Activated CD8-positive, alpha-beta T cell treated with anti-CD3 and anti-CD28 coated beads, Interleukin-2, amount 10 ng/mL, durations not matched to agents 7 days and 5 days (primary cell): ENCODE measurements at regions of chr10 and their contacts with region 1.

Region 1: GRCh38 chr10:22988581-22989360 is 60.9 kb downstream of the ARMC3 start:
- DNase-seq: peak; percentile 78
- ATAC-seq: peak; percentile 71
- H3K4me3 Mint-ChIP-seq: no peak overlapping the region
- H3K27ac Mint-ChIP-seq: no peak overlapping the region
- H3K4me1 Mint-ChIP-seq: peaks cover 21% of the 10 kb centered on the region
- H3K27me3 Mint-ChIP-seq: peaks cover 11% of the 10 kb centered on the region

Region 2: GRCh38 chr10:21993360-21994001 is 995.3 kb before region 1 on chr10:
- CTCF ChIA-PET with region 1: interaction called, 29 read pairs
- POLR2A ChIA-PET with region 1: no interaction called
- DNase-seq: no peak
- ATAC-seq: no peak
- H3K4me3 Mint-ChIP-seq: no peak overlapping the region
- H3K27ac Mint-ChIP-seq: no peak overlapping the region
- H3K4me1 Mint-ChIP-seq: peaks cover 2% of the 10 kb centered on the region
- H3K27me3 Mint-ChIP-seq: no peaks in the 10 kb centered on the region

Region 3: GRCh38 chr10:22010973-22011408 is 977.8 kb before region 1 on chr10:
- CTCF ChIA-PET with region 1: interaction called, 11 read pairs
- POLR2A ChIA-PET with region 1: no interaction called
- DNase-seq: no peak
- ATAC-seq: no peak
- H3K4me3 Mint-ChIP-seq: no peak overlapping the region
- H3K27ac Mint-ChIP-seq: no peak overlapping the region
- H3K4me1 Mint-ChIP-seq: no peaks in the 10 kb centered on the region
- H3K27me3 Mint-ChIP-seq: peaks cover 25% of the 10 kb centered on the region

Region 4: DNA sequence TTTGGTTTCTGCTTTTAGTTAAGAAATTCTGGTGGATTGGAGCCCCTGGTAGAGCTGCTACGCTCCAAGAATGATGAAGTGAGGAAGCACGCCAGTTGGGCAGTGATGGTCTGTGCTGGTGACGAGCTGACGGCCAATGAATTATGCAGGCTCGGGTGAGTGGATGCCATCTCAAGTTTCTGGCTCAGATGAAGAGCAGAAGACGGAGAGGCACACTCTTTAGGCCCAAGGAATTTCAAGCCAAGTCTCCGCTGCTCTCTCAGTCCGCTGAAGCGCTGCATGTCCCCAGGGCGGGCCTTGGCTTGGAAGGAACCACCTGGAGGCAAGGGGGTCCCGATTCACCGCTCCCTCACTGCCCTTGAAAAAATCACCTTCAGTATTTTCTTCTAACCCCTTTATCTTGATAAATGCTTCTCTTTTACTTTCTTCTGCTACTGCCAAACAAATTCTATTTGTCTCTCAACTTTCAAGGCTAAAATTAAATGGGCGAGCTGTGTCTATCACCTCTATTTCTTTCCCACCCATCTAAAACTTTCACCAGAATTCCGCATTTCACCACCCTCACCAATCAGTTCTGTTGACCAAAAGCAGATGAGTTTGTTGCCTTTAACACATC is 13.2 kb after region 1 on chr10:
- CTCF ChIA-PET with region 1: interaction called, 11 read pairs
- POLR2A ChIA-PET with region 1: no interaction called
- DNase-seq: no peak
- ATAC-seq: no peak
- H3K4me3 Mint-ChIP-seq: no peak overlapping the region
- H3K27ac Mint-ChIP-seq: no peak overlapping the region
- H3K4me1 Mint-ChIP-seq: no peaks in the 10 kb centered on the region
- H3K27me3 Mint-ChIP-seq: peaks cover 16% of the 10 kb centered on the region

Region 5: DNA sequence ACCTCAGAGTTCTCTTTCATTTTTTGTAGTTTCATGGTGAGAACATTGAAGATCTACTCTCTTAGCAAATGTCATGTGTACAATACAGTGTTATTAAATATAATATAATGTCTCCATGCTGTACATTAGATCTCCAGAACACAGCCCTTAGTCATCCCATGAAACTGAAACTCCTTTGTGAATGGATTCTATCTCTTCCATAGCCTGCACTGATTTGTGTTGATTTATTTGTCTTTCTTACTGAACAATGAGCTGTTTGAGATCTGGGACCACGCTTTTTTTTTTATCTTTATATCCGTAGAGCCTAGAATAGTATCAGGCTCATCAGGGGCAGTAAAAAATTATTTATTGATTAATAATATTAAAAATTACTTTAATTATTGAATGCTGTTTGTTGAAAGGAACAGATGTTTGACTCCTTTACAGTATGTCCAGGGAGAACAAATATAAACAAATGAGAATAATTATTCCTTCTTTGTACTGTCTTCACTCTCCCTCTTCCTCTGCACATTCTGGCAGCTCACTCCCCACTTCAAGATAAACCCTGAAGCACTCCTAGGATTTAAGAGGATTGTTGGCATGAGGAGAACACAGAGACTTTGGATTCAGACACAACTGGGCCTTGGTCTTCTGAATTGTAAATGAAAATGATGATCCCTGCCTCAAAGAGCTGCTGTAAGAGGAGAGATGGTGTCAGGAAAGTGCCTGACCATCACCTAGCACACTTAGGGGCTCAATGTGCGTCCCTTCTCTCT is 25.0 kb after region 1 on chr10:
- CTCF ChIA-PET with region 1: no interaction called
- POLR2A ChIA-PET with region 1: no interaction called
- DNase-seq: no peak
- ATAC-seq: no peak
- H3K4me3 Mint-ChIP-seq: no peak overlapping the region
- H3K27ac Mint-ChIP-seq: no peak overlapping the region
- H3K4me1 Mint-ChIP-seq: no peaks in the 10 kb centered on the region
- H3K27me3 Mint-ChIP-seq: peaks cover 21% of the 10 kb centered on the region

Region 6: DNA sequence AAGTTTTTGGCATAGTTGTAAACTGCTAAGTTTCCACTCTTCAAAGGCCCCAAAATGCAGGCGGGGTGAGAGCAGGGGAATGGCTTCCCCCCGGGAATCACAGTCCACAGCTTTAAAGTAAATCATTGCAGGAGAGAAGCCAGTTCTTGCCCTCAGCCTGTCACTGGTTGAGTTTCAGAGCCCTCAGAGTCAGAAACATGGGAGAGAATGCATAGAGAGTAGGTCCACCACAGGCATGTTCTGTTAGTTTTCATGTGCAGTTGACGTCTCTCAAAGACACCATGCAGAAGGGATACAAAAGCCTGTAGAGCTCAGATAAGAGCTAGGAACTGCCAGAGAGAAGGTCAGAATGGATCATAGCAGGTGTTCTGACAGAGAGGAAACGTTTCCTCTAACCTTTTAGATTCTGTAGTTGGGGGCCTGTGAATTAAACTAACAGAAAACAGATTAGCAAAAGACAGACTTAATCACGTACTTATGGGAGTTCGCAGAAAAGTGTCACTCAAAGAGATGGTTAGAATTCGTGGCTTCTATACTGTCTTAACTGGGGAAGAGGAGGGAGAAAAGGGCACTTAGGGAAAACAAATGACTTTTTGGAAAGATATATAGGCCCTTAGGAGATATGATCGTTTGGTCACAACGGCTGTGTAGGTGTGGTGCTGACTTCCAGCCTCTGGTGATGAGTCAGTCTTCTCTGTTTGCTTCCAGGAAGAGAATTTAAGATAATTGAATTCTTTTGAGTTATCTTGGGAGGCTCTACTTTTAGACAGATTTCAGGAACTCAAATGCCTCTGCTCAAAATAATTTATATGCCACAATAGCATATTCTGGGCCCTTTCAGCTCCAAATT is 58.7 kb after region 1 on chr10:
- CTCF ChIA-PET with region 1: no interaction called
- POLR2A ChIA-PET with region 1: no interaction called
- DNase-seq: no peak
- ATAC-seq: no peak
- H3K4me3 Mint-ChIP-seq: no peak overlapping the region
- H3K27ac Mint-ChIP-seq: no peak overlapping the region
- H3K4me1 Mint-ChIP-seq: no peaks in the 10 kb centered on the region
- H3K27me3 Mint-ChIP-seq: peaks cover 3% of the 10 kb centered on the region

Region 7: GRCh38 chr10:23110722-23111516 is 122.1 kb after region 1 on chr10:
- CTCF ChIA-PET with region 1: no interaction called
- POLR2A ChIA-PET with region 1: no interaction called
- DNase-seq: no peak
- ATAC-seq: no peak
- H3K4me3 Mint-ChIP-seq: no peak overlapping the region
- H3K27ac Mint-ChIP-seq: no peak overlapping the region
- H3K4me1 Mint-ChIP-seq: no peaks in the 10 kb centered on the region
- H3K27me3 Mint-ChIP-seq: no peaks in the 10 kb centered on the region